Vagina (tissue), 2 donors: ENCODE measurements at regions of chr22 and their contacts with region 1.

Region 1: DNA sequence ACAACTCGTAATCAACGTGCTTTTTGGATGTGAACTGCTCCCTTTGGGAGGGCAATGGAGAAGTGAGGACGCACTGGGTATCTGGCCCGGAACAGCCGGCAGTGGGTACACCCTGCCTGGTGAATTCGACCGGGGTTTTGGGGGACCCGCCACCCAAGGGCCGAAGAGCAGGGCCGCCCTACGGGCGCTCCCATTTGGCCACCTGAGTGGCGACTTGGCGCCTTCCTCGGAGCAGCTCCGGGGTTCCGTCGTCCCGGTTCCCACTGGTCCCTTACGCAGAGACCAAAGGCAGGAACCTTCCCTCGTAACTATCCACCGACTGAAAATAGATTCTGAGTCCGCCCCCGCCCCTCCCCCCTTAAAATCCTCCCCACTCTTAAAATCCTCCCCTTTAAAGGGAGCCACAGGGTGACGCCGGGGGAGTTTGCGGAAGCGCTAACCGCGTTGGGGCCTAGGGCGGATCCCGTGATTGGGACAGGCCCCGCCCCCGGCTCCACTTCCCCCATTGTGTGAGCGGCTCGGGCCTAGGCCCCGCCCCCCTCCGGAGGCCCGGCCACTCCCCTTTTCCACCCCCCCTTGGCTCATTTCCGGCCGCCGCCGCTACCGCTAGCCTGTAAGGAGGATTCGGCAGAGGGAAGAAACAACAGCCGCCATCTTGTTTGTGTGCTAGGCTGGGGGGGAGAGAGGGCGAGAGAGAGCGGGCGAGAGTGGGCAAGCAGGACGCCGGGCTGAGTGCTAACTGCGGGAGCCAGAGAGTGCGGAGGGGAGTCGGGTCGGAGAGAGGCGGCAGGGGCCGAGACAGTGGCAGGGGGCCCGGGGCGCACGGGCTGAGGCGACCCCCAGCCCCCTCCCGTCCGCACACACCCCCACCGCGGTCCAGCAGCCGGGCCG is 1.0 kb upstream of the EP300 start:
- DNase-seq: peak; percentile 97 to 99
- H3K4me3 ChIP-seq: peak overlapping the region; percentile 91 to 98
- H3K27ac ChIP-seq: peak overlapping the region; percentile 100
- H3K4me1 ChIP-seq: peaks cover 39% of the 10 kb centered on the region
- H3K27me3 ChIP-seq: no peaks in the 10 kb centered on the region
- CTCF ChIP-seq: no peak
- POLR2A ChIP-seq: peak; percentile 70 to 96

Region 2: GRCh38 chr22:40950962-40951794 is 140.2 kb before region 1 on chr22 and contains the start of gene RBX1:
- intact Hi-C with region 1: loop called (anchors 1 kb)
- DNase-seq: peak; percentile 99
- H3K4me3 ChIP-seq: peak within 1 kb of the TSS; percentile 65 to 85
- H3K27ac ChIP-seq: peak within 1 kb of the TSS; percentile 96
- H3K4me1 ChIP-seq: peaks cover 22% of the 10 kb centered on the region
- H3K27me3 ChIP-seq: no peaks in the 10 kb centered on the region
- CTCF ChIP-seq: no peak
- POLR2A ChIP-seq: peak in 1 of 2 donors; percentile 89
- total RNA-seq, gene RBX1: 54.8 TPM

Region 3: GRCh38 chr22:41022470-41023298 is 68.7 kb before region 1 on chr22:
- intact Hi-C with region 1: loop called (anchors 2 kb)
- DNase-seq: peak in 1 of 2 donors; percentile 93
- H3K4me3 ChIP-seq: peak overlapping the region; percentile 66 to 82
- H3K27ac ChIP-seq: peak overlapping the region; percentile 98
- H3K4me1 ChIP-seq: peaks cover 13% of the 10 kb centered on the region
- H3K27me3 ChIP-seq: no peaks in the 10 kb centered on the region
- CTCF ChIP-seq: no peak
- POLR2A ChIP-seq: peak in 1 of 2 donors; percentile 76

Region 4: DNA sequence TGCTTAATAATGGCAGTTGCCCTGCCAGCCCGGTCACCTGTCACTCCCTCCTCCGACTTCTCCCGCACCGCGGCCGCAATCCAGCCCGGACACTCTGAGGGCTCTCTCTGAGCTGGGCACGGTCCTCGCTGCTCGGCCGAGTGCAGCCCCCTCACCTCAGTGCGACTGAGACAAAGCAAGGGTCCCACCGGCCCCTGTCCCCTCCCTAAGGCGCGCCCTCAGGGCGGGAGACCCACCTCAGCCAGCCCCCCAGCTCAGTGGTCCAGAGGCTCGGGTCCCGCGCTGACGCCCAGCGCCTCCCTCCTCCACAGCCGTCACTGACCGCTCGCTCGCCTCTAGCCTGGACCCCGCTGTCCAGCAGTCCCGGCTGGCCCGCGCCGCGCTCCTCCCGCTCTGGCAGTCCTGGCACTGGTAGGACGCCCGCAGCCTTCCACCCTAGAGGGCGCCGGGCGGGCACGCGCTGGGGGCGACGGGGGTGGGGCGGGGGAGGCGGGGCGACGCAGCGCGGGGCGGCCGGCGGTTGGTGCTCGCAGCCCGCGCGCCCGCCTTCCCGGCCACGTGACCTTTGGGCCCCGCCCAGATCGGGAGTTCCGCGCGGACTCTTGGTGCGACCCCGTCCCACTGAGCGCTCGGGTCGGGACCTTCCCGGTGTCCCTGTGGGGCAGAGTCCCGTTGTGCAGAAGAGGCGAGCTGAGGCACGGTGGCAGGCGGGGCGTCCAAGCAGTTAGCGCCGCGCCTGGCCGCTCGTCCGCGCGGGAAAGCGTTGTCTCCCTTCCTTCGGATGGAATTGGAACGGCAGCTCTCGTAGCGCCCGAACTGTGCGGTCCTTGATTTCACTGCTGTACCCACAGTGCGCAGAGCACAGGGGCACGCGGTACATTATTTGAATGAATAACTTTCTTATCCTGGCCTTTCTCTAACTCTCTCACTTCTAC is 105.9 kb after region 1 on chr22:
- intact Hi-C with region 1: no loop called
- DNase-seq: no peak
- H3K4me3 ChIP-seq: peak overlapping the region; percentile 78 to 80
- H3K27ac ChIP-seq: peak overlapping the region; percentile 31
- H3K4me1 ChIP-seq: peaks cover 21% of the 10 kb centered on the region
- H3K27me3 ChIP-seq: no peaks in the 10 kb centered on the region
- CTCF ChIP-seq: peak in 1 of 3 experiments; percentile 19
- POLR2A ChIP-seq: no peak